ENCODE measurements at regions of chrX and their contacts with region 1.

Region 1: GRCh38 chrX:56802921-56803849 is 74.1 kb downstream of the NBDY start:
- DNase-seq: peak; percentile 52 to 92 (median 90)
- H3K4me3 ChIP-seq: peak overlapping the region in 4 of 7 experiments; percentile 69 to 82 (median 74)
- H3K27ac ChIP-seq: peak overlapping the region; percentile 46 to 65
- H3K4me1 ChIP-seq: peaks cover 0 to 24% (median 9%) of the 10 kb centered on the region in 4 experiments
- H3K27me3 ChIP-seq: peaks cover 0 to 3% (median 0%) of the 10 kb centered on the region in 5 experiments

Region 2: GRCh38 chrX:56618323-56618722 is 184.9 kb before region 1 on chrX:
- CTCF ChIA-PET with region 1: no interaction called
- POLR2A ChIA-PET with region 1: no interaction called
- DNase-seq: peak in 1 of 3 donors; percentile 17
- H3K4me3 ChIP-seq: no peak overlapping the region
- H3K27ac ChIP-seq: no peak overlapping the region
- H3K4me1 ChIP-seq: peaks cover 0 to 6% (median 0%) of the 10 kb centered on the region in 4 experiments
- H3K27me3 ChIP-seq: no peaks in the 10 kb centered on the region

Region 3: GRCh38 chrX:56788717-56789122 is 14.5 kb before region 1 on chrX:
- CTCF ChIA-PET with region 1: no interaction called
- POLR2A ChIA-PET with region 1: no interaction called
- DNase-seq: peak in 2 of 3 donors; percentile 39 to 80
- H3K4me3 ChIP-seq: peak overlapping the region in 2 of 7 experiments; percentile 55 to 59
- H3K27ac ChIP-seq: no peak overlapping the region
- H3K4me1 ChIP-seq: no peaks in the 10 kb centered on the region
- H3K27me3 ChIP-seq: no peaks in the 10 kb centered on the region

Region 4: DNA sequence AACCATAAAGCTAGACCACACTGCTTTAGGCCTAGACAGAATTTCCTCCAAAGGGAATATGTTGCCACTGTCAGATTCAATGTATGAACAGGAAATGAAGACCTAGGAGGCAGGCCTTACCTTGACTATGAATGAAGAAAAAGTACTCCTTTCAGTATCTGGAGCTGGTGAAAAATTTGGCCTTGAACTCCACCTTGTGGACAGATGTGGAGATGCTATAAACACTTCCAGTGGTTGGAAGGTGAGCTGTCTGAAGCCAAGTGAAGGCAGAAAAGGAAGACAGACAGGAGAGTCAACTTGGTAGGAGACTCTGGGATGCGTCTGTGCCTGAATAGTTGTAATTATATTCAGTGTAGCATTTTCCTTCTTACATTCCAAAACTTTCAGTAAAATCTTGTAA is 175.0 kb after region 1 on chrX:
- CTCF ChIA-PET with region 1: interaction called, 20 read pairs
- POLR2A ChIA-PET with region 1: no interaction called
- DNase-seq: peak; percentile 39 to 68 (median 59)
- H3K4me3 ChIP-seq: no peak overlapping the region
- H3K27ac ChIP-seq: no peak overlapping the region
- H3K4me1 ChIP-seq: no peaks in the 10 kb centered on the region
- H3K27me3 ChIP-seq: peaks cover 0 to 10% (median 0%) of the 10 kb centered on the region in 5 experiments